ENCODE measurements at regions of chr6 and their contacts with region 1.

Region 1: GRCh38 chr6:79672631-79673111 is 41.5 kb downstream of the SH3BGRL2 start:
- DNase-seq: no peak
- ATAC-seq: no peak
- H3K4me3 Mint-ChIP-seq: no peak overlapping the region
- H3K27ac Mint-ChIP-seq: no peak overlapping the region
- H3K4me1 Mint-ChIP-seq: peaks cover 26% of the 10 kb centered on the region
- H3K27me3 Mint-ChIP-seq: no peaks in the 10 kb centered on the region

Region 2: GRCh38 chr6:79570129-79571029 is 102.3 kb before region 1 on chr6:
- CTCF ChIA-PET with region 1: interaction called, 13 read pairs
- DNase-seq: no peak
- ATAC-seq: peak; percentile 39
- H3K4me3 Mint-ChIP-seq: no peak overlapping the region
- H3K27ac Mint-ChIP-seq: no peak overlapping the region
- H3K4me1 Mint-ChIP-seq: no peaks in the 10 kb centered on the region
- H3K27me3 Mint-ChIP-seq: peaks cover 9% of the 10 kb centered on the region